ENCODE measurements at regions of chr14 and their contacts with region 1.

Region 1: GRCh38 chr14:33792720-33793368 is 158.0 kb downstream of the EGLN3 start:
- DNase-seq: peak; percentile 29
- ATAC-seq: peak; percentile 85
- H3K4me3 ChIP-seq: no peak overlapping the region
- H3K27ac ChIP-seq: no peak overlapping the region
- H3K4me1 ChIP-seq: peaks cover 3 to 6% of the 10 kb centered on the region in 2 experiments; a peak in 1 of 4 replicates
- H3K27me3 ChIP-seq: peaks cover 44% of the 10 kb centered on the region
- CTCF ChIP-seq: peak; percentile 44 to 97 (median 86); a peak in 5 of 6 replicates
- POLR2A ChIP-seq: no peak
- RAD21 ChIP-seq: peak; percentile 75

Region 2: DNA sequence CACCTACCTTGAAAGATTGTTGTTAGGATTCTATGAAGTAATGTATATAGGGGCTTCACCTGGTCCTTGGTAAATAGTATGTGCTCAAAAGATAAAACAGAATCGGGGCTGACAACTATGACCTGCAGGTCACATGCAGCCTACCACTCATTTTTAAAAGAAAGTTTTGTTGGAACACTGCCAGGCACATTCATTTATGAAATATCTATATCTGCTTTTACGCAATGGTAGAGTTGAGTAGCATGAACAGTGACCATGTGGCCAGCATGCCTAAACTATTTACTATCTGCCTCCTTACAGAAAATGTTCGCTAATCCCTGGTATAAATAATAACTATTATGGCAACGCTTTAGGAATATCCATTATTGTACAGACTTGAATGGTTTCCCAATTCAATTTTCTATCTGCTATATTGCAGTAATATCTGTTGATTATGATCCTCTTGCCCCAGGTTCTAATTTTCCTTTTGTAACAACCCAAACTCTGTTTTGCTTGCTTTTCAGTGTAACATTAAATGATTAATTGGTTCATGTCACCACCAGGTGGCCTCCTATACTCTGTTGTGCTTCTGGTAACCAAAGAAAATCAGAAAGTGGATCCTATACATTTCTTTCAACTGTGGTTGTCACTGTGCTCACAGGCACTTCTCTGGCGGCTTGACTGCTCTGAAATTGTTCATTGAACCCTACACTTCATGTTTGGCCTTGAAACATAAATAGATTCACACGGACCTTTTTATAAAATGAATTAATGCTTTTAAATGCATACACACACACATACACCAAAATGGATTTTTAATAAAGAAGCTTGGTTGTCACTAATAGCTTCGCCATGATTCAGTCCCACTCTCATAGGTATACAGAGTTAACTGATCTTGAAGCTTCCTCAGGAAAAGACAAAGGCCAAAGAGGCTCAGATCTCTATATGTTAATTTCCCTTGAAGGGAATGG is 1081.8 kb before region 1 on chr14:
- CTCF ChIA-PET with region 1: interaction called, 5 read pairs
- POLR2A ChIA-PET with region 1: no interaction called
- RAD21 ChIA-PET with region 1: no interaction called
- intact Hi-C with region 1: loop called (anchors 1 kb)
- DNase-seq: peak; percentile 6
- ATAC-seq: peak; percentile 52; the same call in 1 of the 2 replicates
- H3K4me3 ChIP-seq: no peak overlapping the region
- H3K27ac ChIP-seq: no peak overlapping the region
- H3K4me1 ChIP-seq: no peaks in the 10 kb centered on the region
- H3K27me3 ChIP-seq: peaks cover 15% of the 10 kb centered on the region; the same call in 1 of the 2 replicates
- CTCF ChIP-seq: peak; percentile 33 to 56 (median 49); a peak in 5 of 6 replicates
- POLR2A ChIP-seq: no peak
- RAD21 ChIP-seq: peak; percentile 47

Region 3: GRCh38 chr14:33475623-33476022 is 317.2 kb before region 1 on chr14:
- CTCF ChIA-PET with region 1: no interaction called
- POLR2A ChIA-PET with region 1: no interaction called
- RAD21 ChIA-PET with region 1: no interaction called
- intact Hi-C with region 1: loop called (anchors 5 kb)
- DNase-seq: no peak
- ATAC-seq: no peak
- H3K4me3 ChIP-seq: no peak overlapping the region
- H3K27ac ChIP-seq: no peak overlapping the region
- H3K4me1 ChIP-seq: no peaks in the 10 kb centered on the region
- H3K27me3 ChIP-seq: no peaks in the 10 kb centered on the region
- CTCF ChIP-seq: peak in 2 of 3 experiments; percentile 32 to 36; a peak in 4 of 6 replicates
- POLR2A ChIP-seq: no peak
- RAD21 ChIP-seq: no peak; the same call in 1 of the 2 replicates

Region 4: DNA sequence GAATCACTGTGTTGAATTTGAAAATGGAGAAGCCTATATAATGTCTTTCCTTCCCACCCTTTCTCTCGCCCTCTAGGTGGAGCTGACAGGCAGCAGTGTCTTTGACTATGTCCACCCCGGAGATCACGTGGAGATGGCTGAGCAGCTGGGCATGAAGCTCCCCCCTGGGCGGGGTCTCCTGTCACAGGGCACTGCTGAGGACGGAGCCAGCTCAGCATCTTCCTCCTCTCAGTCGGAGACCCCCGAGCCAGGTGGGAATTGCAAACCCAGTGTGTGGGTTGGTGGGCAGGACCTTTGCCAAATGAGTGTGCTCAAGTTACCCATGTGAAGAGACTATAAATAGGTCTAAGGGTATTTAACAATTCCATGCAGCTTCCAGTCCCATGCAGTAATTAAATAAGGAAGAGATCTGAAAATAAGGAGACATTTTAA is 116.7 kb before region 1 on chr14:
- CTCF ChIA-PET with region 1: interaction called, 11 read pairs
- POLR2A ChIA-PET with region 1: no interaction called
- RAD21 ChIA-PET with region 1: interaction called in 1 of 2 experiments, 3 read pairs
- intact Hi-C with region 1: loop called (anchors 1 kb)
- DNase-seq: peak; percentile 16
- ATAC-seq: peak; percentile 97
- H3K4me3 ChIP-seq: no peak overlapping the region
- H3K27ac ChIP-seq: no peak overlapping the region
- H3K4me1 ChIP-seq: no peaks in the 10 kb centered on the region
- H3K27me3 ChIP-seq: no peaks in the 10 kb centered on the region; the same call in 1 of the 2 replicates
- CTCF ChIP-seq: peak; percentile 18 to 54 (median 54); a peak in 4 of 6 replicates
- POLR2A ChIP-seq: no peak
- RAD21 ChIP-seq: peak; percentile 42; the same call in 1 of the 2 replicates

Region 5: DNA sequence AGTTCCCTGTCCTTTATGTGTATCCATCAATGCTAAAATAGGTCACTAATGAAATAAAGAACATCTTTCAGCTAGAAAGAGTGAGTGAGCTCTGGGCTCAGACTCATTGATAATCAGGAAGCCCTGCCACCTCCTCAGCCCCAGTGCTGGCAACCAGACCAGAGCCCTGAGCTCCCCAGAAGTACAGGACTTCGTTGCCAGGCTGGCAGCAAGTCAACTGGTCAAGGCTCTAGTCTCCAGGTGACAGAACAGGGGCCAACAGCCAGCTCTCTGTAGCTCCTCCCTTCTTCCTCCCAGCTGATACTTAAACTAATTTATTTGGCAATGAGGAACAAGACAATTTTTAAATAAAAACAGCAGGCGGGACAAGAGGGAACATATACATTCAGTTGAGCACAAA is 12.7 kb after region 1 on chr14:
- CTCF ChIA-PET with region 1: interaction called, 26 read pairs
- POLR2A ChIA-PET with region 1: no interaction called
- RAD21 ChIA-PET with region 1: interaction called in 1 of 2 experiments, 3 read pairs
- intact Hi-C with region 1: no loop called
- DNase-seq: no peak
- ATAC-seq: no peak
- H3K4me3 ChIP-seq: no peak overlapping the region
- H3K27ac ChIP-seq: no peak overlapping the region
- H3K4me1 ChIP-seq: no peaks in the 10 kb centered on the region
- H3K27me3 ChIP-seq: peaks cover 17% of the 10 kb centered on the region
- CTCF ChIP-seq: no peak
- POLR2A ChIP-seq: no peak
- RAD21 ChIP-seq: no peak

Region 6: DNA sequence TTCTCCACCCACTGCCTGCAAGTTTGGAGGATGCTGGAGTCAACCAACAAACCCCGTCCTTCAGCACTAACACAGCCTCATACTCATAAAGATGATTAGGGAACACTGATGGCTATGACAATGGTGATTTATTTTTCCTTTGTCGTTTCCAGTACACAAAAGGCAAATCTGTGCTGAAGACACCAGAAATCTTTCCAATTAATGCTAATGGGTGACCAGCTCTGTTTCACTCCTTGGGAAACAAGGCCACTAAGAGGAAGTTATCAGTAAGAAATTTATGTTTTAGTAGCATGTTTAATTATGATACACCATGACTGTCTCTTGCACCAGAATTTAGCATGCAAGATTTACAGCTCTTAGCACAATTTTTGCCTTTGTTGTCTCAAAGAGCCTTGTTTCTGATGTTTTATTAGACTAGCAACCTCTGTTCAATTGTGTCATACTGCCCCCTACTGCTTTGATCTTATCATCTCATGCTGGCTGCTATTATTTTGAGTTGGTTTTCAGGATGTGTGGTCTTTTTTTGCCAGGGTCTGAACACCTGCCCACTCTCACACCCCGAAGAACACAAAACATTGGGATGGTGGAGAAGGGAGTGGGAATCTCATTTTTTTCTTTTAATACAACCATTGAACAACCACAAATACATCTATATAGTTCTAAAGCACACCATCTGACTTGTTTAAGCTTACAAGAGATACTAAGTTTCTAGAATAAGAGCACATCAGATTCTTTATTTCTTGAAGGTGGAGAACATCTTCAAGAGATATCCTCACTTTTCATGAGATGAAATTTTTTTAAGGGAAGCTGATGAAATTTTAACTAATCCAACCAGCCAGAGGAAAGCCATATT is 508.3 kb after region 1 on chr14:
- CTCF ChIA-PET with region 1: interaction called, 11 read pairs
- POLR2A ChIA-PET with region 1: no interaction called
- RAD21 ChIA-PET with region 1: no interaction called
- intact Hi-C with region 1: no loop called
- DNase-seq: peak; percentile 28
- ATAC-seq: peak; percentile 75
- H3K4me3 ChIP-seq: no peak overlapping the region
- H3K27ac ChIP-seq: no peak overlapping the region
- H3K4me1 ChIP-seq: peaks cover 9% of the 10 kb centered on the region in 2 experiments
- H3K27me3 ChIP-seq: no peaks in the 10 kb centered on the region
- CTCF ChIP-seq: peak; percentile 34 to 83 (median 70); a peak in 5 of 6 replicates
- POLR2A ChIP-seq: no peak
- RAD21 ChIP-seq: peak; percentile 70